ENCODE measurements at regions of chr3 and their contacts with region 1.

Region 1: DNA sequence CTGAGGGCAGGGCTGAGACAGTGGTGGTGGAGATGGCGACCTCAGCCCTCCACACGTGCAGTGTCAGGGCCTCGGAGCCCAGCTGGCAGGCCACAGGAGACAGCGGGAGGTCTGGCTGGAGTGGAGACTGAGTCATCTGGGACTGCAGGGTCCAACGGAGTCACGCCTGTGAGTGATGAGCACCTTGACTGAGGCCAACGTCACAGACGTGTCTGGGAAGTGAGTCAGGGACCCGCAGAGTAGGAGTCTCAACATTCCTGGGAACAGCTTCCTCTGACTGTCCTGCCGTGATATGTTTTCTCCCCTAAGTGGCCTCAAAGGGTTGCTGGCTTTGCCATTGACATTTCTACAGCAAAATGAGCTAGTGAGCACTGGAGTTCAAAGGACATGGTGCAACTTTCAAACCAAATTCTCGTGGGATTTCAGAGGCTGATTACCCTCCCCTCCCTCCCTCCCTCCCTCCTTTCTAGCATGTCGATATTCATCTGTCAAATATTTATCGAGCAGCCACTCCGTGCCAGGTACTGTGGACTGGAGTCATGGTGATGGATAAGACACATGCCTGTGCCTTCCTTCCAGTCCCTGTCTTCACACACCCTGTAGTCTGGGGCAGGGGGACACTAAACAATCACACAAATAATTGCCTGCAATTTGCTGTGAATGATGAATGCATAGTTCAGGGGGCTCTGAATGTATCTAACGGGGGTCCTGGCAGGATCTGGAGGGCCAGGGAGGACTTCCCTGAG is 53.3 kb upstream of the AMOTL2 start:
- DNase-seq: peak; percentile 97
- H3K4me3 ChIP-seq: no peak overlapping the region
- H3K27ac ChIP-seq: peak overlapping the region; percentile 45
- H3K4me1 ChIP-seq: peaks cover 24% of the 10 kb centered on the region
- H3K27me3 ChIP-seq: no peaks in the 10 kb centered on the region
- CTCF ChIP-seq: no peak

Region 2: GRCh38 chr3:134291319-134292254 is 136.0 kb before region 1 on chr3:
- CTCF ChIA-PET with region 1: no interaction called
- dilution Hi-C with region 1: no loop called
- in situ Hi-C with region 1: no loop called
- intact Hi-C with region 1: no loop called
- DNase-seq: peak; percentile 64
- H3K4me3 ChIP-seq: no peak overlapping the region
- H3K27ac ChIP-seq: no peak overlapping the region
- H3K4me1 ChIP-seq: no peaks in the 10 kb centered on the region
- H3K27me3 ChIP-seq: no peaks in the 10 kb centered on the region
- CTCF ChIP-seq: no peak

Region 3: DNA sequence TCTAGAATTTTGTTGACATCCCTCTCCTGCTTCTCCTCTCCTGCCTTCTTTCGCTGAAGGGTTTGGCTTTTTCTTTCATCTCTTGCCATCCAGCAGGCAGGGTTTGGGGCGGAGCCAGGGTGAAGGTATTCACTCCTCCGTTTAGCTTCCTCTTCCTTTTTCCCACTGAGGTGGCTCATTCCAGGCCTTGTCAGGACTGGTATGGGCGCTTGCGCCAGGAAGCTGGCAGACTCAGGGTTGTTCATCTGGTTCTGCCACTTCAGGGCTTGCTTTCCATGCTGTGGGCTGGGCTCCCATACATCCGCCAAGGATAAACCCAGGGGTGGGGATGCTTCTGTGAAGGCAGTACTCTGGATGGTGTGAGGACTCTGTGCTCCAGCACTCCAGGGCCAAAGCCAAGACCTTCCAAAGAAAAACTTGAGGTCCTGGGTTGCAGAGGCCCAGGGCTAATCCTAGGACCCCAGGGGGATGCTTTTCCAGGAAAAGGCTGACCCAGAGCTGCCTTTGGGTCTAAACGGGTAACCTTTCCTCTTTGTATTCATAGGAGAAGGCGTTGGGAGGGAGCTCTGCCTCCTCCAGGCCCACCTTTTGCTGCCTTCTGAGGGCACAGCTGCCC is 45.6 kb before region 1 on chr3:
- CTCF ChIA-PET with region 1: no interaction called
- dilution Hi-C with region 1: no loop called
- in situ Hi-C with region 1: no loop called
- intact Hi-C with region 1: loop called (anchors 2 kb)
- DNase-seq: peak; percentile 97
- H3K4me3 ChIP-seq: no peak overlapping the region
- H3K27ac ChIP-seq: peak overlapping the region; percentile 67
- H3K4me1 ChIP-seq: peaks cover 25% of the 10 kb centered on the region
- H3K27me3 ChIP-seq: no peaks in the 10 kb centered on the region
- CTCF ChIP-seq: no peak